Common myeloid progenitor, CD34-positive (primary cell): ENCODE measurements at regions of chr2 and their contacts with region 1.

Region 1: DNA sequence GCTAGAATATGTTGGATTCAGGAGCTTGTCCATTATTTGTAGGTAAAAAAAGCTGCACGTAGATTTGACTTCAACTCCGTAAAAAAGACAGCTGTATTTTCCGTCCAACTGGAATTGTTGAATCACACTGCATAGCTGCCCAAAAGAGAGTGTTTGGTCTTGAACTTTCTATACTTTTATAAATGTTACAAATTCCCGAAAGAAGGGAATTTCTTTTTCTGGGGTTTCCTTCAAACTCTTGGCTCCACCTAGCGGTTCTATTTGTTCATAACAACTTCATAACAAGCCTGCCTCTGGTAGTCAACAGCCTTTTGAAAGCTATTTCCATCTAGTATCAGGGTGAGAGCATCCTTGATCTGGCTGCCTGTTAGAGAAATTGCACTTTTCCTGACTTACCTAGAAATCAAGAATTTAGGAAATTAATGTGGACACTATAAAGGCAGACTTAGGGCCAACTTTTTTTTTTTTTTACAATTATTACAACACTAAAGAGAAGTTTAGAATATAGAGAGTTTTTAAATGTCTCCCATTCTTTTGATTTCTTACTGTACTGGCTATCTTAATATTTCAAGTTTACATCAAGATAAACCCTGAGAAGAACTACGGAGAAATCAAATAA is 48.1 kb downstream of the TMEM185B start:
- DNase-seq: peak; percentile 56 to 72 (median 69)
- H3K4me3 ChIP-seq: peak overlapping the region in 2 of 7 experiments; percentile 41 to 48
- H3K27ac ChIP-seq: no peak overlapping the region
- H3K4me1 ChIP-seq: peaks cover 12 to 21% (median 18%) of the 10 kb centered on the region in 4 experiments
- H3K27me3 ChIP-seq: no peaks in the 10 kb centered on the region

Region 2: DNA sequence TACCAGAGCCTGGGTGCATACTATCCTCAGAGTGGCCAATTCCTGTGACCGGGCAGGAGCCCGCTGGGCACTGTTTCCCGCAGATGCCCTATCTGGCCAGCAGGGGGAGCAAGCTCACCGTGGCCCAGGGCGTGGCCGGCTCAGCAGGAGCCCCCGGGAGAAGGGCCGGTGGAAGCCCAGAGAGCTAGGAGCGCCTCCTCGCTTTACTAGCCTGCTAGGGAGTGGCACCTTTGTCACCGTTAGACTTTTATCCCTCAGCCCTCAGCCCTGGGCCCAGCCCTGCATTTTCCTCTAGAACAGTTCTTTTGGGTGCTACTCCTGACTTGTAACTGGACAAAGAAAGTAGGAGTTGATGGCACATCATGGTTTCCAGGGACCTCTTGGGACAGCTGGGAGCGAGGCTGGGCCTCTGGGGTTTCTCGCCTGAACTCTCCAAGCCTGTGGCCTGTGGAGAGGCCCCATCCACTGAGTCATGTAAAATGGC is 472.1 kb before region 1 on chr2:
- CTCF ChIA-PET with region 1: interaction called, 21 read pairs
- POLR2A ChIA-PET with region 1: interaction called, 4 read pairs
- DNase-seq: peak; percentile 50 to 64 (median 58)
- H3K4me3 ChIP-seq: no peak overlapping the region
- H3K27ac ChIP-seq: no peak overlapping the region
- H3K4me1 ChIP-seq: peaks cover 0 to 3% (median under 1%) of the 10 kb centered on the region in 4 experiments
- H3K27me3 ChIP-seq: peaks cover 0 to 2% (median 0%) of the 10 kb centered on the region in 5 experiments

Region 3: GRCh38 chr2:120005834-120006521 is 169.1 kb before region 1 on chr2:
- CTCF ChIA-PET with region 1: no interaction called
- POLR2A ChIA-PET with region 1: no interaction called
- DNase-seq: no peak
- H3K4me3 ChIP-seq: no peak overlapping the region
- H3K27ac ChIP-seq: no peak overlapping the region
- H3K4me1 ChIP-seq: no peaks in the 10 kb centered on the region
- H3K27me3 ChIP-seq: no peaks in the 10 kb centered on the region

Region 4: DNA sequence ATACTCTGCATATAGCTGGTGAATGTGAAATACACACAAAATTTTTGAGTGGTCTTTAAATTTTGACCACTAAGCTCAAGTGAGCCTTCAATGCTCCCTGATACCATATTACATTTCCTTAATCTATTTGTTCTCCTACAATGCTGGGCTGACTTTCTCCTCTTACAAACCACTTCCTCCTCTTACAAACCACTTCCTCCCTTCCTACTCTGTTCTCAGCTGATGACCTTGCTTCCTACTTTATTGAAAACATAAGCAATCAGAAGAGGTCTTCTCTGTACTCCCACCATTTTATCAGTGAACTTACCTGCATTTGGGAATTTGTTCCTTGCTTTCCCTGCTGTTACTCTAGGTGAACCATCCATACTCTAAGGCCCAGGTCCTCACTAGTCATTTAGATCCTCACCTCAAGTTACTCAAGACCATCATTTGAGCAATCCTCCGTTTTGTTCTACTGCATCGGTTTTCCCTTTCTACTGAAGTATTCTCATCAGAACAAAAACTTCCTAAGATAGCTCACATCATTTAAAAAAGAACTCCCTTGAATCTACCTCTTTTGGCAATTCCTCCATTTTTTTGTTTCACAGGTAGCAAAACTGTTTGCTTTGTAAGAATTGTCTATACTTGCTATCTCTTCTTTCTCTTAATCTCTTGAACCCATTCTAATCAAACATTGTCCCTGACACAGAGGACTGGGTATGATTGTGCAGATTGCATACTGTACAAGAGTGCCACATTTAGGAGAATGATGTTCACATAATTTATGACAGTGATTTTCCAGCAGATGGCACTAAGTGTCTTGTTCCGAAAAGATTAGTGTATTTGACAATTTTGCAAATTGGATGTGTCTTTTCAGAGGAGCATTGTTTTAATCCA is 65.6 kb before region 1 on chr2:
- CTCF ChIA-PET with region 1: interaction called, 22 read pairs
- POLR2A ChIA-PET with region 1: interaction called, 3 read pairs
- DNase-seq: peak; percentile 45 to 70 (median 59)
- H3K4me3 ChIP-seq: no peak overlapping the region
- H3K27ac ChIP-seq: no peak overlapping the region
- H3K4me1 ChIP-seq: peaks cover 7 to 13% (median 9%) of the 10 kb centered on the region in 4 experiments
- H3K27me3 ChIP-seq: no peaks in the 10 kb centered on the region

Region 5: DNA sequence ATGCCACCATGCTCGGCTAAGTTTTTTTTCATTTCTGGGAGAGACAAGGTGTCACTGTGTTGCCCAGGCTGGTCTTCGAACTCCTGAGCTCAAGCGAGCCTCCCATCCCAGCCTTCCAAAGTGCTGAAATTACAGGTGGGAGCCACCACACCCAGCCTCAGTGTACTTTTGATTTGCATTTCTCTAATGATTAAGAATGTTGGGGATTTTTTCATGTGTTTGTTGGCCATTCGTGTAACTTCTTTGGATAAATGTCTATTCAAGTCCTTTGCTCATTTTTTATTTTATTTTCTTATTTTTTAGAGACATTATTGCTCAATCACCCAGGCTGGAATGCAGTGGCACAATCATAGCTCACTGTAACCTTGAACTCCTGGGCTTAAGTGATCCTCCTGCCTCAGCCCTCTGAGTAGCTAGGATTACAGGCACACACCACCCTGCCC is 25.0 kb before region 1 on chr2:
- CTCF ChIA-PET with region 1: no interaction called
- POLR2A ChIA-PET with region 1: no interaction called
- DNase-seq: no peak
- H3K4me3 ChIP-seq: no peak overlapping the region
- H3K27ac ChIP-seq: no peak overlapping the region
- H3K4me1 ChIP-seq: no peaks in the 10 kb centered on the region
- H3K27me3 ChIP-seq: no peaks in the 10 kb centered on the region

Region 6: GRCh38 chr2:120204022-120204405 is 28.9 kb after region 1 on chr2:
- CTCF ChIA-PET with region 1: interaction called, 12 read pairs
- POLR2A ChIA-PET with region 1: no interaction called
- DNase-seq: no peak
- H3K4me3 ChIP-seq: no peak overlapping the region
- H3K27ac ChIP-seq: no peak overlapping the region
- H3K4me1 ChIP-seq: peaks cover 0 to 2% (median 0%) of the 10 kb centered on the region in 4 experiments
- H3K27me3 ChIP-seq: no peaks in the 10 kb centered on the region